Naive thymus-derived CD8-positive, alpha-beta T cell (primary cell): ENCODE measurements at regions of chr9 and their contacts with region 1.

Region 1: DNA sequence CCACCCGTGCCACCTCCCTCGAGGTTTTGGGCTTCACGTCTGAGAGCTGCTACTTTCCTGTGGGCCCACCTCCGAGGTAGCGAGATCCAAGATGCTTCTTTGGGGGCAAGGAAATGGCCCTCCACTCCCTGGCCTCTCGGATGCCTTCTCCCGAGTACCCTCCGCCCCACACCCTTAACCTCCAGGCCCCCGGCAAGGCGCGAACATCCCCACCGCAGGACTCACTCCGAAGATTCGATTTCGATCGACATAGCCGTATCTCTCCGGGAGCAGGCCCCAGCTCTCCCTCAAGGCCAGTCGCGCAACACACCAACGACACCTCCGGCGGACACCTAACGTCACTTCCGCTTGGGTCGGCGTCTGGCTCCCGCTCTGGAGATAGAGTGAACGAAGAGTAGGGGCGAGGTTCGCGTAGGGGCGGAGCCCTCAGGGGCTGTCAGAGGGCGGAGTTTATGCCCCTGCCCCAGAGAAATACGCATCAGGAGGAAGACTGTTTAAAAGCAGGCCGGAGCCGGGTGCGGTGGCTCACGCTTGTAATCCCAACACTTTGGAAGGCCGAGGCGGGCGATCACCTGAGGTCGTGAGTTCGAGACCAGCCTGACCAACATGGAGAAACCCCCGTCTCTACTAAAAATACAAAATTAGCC is at the start of gene SMU1:
- DNase-seq: peak; percentile 85 to 98 (median 96)
- ATAC-seq: peak; percentile 92 to 95
- H3K4me3 Mint-ChIP-seq: peak within 1 kb of the TSS; percentile 92 to 100 (median 99)
- H3K27ac Mint-ChIP-seq: peak within 1 kb of the TSS; percentile 96 to 100 (median 100)
- H3K4me1 Mint-ChIP-seq: peaks cover 18 to 52% (median 44%) of the 10 kb centered on the region in 4 donors
- H3K27me3 Mint-ChIP-seq: peaks cover 0 to 2% (median 0%) of the 10 kb centered on the region in 5 donors
- polyA plus RNA-seq, gene SMU1: 19.5 to 24.3 (median 23.7) TPM

Region 2: DNA sequence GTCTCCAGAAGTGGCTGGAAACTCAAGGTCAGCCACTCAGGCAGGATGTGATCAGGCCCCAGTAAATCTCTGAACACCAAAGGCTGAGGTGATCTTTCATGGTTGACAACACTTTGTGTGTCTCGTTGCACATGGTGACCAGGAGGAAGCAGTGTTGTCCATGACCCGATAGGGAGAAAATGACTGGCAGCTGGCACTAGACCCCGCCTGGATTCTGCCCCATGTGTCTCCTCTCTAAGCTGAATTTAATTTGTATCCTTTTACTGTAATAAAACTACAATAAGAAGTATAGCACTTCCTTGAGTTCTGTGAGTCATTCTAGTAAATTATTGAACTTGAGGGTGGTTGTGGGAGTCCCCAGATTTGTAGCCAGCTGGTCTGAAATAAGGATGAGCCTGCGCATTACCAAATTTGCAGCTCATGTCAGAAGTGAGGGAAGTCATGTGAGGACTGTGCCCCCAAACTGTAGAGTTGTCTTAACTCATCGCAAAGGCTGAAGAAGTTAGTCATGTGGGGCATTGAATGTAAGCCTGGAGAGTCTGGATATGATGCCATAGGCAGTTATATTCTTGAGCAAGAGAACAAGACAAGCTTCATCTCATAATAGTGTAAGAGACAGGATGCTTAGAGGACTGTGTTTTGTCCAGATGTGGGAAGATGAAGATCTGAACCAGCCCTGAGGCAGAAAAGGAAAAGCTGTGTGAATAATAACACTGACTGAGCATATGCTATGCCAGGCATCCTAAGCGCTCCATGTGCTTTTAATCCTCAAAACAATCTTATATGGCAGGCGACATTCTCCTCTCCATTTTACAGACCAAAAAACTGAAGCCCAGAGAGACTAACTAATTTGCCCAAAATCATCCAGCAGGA is 237.2 kb before region 1 on chr9:
- POLR2A ChIA-PET with region 1: no interaction called
- DNase-seq: no peak
- ATAC-seq: no peak
- H3K4me3 Mint-ChIP-seq: no peak overlapping the region
- H3K27ac Mint-ChIP-seq: no peak overlapping the region
- H3K4me1 Mint-ChIP-seq: no peaks in the 10 kb centered on the region
- H3K27me3 Mint-ChIP-seq: peaks cover 3 to 51% (median 10%) of the 10 kb centered on the region in 5 donors

Region 3: DNA sequence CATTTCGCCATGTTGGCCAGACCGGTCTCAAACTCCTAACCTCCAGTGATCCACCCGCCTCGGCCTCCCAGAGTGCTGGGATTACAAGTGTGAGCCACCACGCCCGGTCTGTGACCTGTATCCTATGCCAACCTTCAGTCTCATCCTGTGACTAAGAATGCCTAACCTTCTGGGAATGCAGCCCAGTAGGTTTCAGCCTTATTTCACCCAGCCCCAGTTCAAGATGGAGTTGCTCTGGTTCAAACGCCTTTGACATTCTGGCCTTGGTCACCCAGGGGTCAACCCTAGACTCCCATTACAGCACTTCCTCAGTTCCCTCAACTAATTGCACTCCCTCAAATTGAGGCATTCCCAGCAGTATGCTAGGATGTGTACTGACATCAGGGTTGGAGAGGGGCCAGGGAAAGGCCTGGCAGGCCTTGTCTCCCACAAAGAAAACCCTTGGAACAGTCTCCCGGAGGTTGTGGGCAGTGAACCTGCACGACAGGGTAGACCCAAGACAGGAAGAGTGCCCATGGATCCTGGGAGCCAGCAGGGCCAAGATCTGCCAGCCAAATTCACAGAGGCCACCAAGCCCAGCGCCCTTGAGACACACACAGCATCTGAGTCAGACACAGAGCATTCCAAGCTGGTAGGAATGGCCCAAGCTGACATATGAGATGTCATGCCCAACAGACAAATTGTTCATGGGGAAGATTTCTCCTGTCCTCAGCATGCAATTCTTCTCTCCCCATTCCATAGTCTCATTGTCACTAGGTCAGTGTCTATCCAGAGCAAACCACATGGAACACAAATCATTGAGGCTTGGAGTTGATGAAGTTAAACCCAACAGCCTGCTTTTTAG is 24.8 kb after region 1 on chr9:
- POLR2A ChIA-PET with region 1: no interaction called
- DNase-seq: no peak
- ATAC-seq: no peak
- H3K4me3 Mint-ChIP-seq: no peak overlapping the region
- H3K27ac Mint-ChIP-seq: peak overlapping the region in 2 of 10 donors; percentile 27 to 64
- H3K4me1 Mint-ChIP-seq: no peaks in the 10 kb centered on the region
- H3K27me3 Mint-ChIP-seq: no peaks in the 10 kb centered on the region

Region 4: DNA sequence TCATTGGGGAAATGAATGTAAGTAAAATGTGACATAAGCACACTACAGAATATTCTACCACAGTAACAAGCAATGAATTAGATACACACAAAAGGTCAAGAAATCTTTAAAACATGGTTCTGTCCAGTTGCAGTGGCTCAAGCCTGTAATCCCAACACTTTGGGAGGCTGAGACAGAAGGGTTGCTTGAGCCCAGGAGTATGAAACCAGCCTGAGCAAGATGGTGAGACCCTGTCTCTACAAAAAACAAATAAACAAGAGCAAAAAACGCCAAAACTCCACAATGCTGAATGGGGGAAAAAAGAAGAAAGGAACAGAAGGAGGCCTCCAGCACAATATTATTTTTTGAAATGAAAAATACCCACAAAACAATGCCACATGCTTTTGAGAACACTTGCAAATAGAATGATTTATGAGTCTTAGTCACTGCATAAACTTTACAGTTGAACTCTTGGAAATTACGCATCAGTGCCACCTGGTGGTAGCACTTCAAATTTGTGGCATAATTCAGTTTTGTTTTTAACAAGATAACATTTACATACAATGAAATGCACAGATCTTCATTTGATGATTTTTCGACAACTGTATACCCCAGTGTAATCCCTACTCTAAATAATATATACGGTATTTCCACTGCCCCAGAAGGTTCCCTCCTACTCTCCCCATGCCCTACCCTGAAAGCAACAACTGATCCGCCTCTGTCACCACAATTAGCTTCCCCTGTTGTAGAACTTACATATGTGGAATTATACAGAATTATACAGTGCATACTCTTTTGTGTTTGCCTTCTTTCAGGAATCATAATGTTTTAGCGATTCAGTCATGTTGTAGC is 149.1 kb after region 1 on chr9:
- POLR2A ChIA-PET with region 1: interaction called, 12 read pairs
- DNase-seq: peak; percentile 46 to 79 (median 66)
- ATAC-seq: peak; percentile 48 to 71
- H3K4me3 Mint-ChIP-seq: peak overlapping the region in 1 of 10 donors; percentile 5
- H3K27ac Mint-ChIP-seq: peak overlapping the region in 4 of 10 donors; percentile 1 to 61 (median 36)
- H3K4me1 Mint-ChIP-seq: peaks cover 11 to 37% (median 19%) of the 10 kb centered on the region in 4 donors
- H3K27me3 Mint-ChIP-seq: peaks cover 0 to 2% (median 0%) of the 10 kb centered on the region in 5 donors

Region 5: GRCh38 chr9:33290247-33291030 is 214.0 kb after region 1 on chr9 and contains the start of gene NFX1:
- POLR2A ChIA-PET with region 1: interaction called, 11 read pairs
- DNase-seq: peak; percentile 93 to 100 (median 99)
- ATAC-seq: peak; percentile 84 to 85
- H3K4me3 Mint-ChIP-seq: peak within 1 kb of the TSS; percentile 82 to 99 (median 95)
- H3K27ac Mint-ChIP-seq: peak within 1 kb of the TSS; percentile 97 to 100 (median 99)
- H3K4me1 Mint-ChIP-seq: peaks cover 27 to 72% (median 63%) of the 10 kb centered on the region in 4 donors
- H3K27me3 Mint-ChIP-seq: peaks cover 0 to 2% (median 0%) of the 10 kb centered on the region in 5 donors
- polyA plus RNA-seq, gene NFX1: 22.8 to 42.7 (median 31.6) TPM